ENCODE measurements at regions of chr18 and their contacts with region 1.

Region 1: DNA sequence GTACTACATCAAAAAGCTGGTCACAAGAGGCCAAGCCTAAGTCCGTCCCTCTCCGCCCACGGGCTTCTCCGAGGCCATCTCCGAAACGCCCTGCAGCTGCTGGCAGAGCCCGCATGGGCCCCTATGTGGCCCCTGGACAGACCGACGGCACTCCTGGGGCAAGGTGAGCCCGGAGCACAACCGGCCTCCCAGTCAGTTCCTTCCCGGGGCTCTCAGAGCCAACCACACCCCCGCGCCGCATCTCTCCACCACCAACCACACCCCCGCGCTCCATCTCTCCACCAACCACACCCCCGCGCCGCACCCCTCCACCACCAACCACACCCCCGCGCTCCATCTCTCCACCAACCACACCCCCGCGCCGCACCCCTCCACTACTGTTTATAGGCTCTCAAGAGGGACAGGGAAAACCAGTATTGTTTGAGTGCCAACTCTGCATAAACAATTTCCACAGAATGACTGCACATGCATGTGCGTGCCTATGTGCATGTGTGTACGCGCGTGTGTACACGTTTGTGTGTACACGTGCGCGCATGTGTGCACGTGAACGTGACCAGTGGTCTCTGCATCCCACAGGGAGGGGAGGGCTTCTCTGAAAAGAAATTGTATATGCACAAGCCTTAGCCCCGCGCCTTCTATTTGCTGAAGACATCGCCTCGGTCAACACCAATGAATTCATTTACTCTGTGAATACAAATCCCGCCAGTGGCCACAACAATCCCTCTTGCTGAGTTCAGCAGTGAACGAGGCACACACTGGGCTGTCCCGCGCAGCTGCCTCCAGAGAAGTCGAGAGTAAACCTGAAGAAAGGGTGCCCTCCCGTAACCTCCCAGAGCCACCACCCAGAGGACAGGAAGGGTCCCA is 93.3 kb downstream of the ZNF516 start:
- DNase-seq: no peak
- ATAC-seq: no peak
- H3K4me3 ChIP-seq: no peak overlapping the region
- H3K27ac ChIP-seq: no peak overlapping the region
- H3K4me1 ChIP-seq: no peaks in the 10 kb centered on the region
- H3K27me3 ChIP-seq: no peaks in the 10 kb centered on the region
- CTCF ChIP-seq: no peak
- POLR2A ChIP-seq: no peak

Region 2: DNA sequence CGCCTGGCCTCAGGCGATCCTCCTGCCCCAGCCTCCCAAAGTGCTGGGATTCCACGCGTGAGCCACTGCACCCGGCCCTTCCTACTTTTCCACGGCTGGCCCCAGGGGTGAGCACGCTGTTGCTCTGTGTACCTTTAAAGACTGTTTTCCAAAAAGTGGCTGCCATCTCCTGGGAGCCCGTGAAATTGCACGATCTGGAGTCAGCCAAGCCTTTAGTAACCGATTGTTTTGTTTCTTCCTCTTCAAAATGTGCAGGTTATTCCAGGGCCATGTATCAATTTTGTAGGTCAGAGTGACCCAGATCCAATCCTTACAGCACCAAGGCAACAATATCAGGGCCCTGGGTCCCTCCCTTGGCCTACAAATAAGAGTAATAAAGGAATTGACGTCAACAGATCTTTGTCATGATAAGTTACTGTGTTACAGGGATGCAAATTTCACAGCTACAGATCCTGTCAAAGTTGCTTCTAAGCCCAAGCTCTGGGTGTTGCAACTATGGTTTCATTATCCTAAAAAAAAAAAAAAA is 285.1 kb after region 1 on chr18:
- intact Hi-C with region 1: loop called (anchors 5 kb)
- DNase-seq: peak; percentile 60 to 72 (median 66)
- ATAC-seq: peak; percentile 85
- H3K4me3 ChIP-seq: no peak overlapping the region
- H3K27ac ChIP-seq: no peak overlapping the region
- H3K4me1 ChIP-seq: peaks cover 5% of the 10 kb centered on the region
- H3K27me3 ChIP-seq: peaks cover 0 to 6% of the 10 kb centered on the region in 2 donors
- CTCF ChIP-seq: peak; percentile 24 to 75 (median 64)
- POLR2A ChIP-seq: no peak

Region 3: DNA sequence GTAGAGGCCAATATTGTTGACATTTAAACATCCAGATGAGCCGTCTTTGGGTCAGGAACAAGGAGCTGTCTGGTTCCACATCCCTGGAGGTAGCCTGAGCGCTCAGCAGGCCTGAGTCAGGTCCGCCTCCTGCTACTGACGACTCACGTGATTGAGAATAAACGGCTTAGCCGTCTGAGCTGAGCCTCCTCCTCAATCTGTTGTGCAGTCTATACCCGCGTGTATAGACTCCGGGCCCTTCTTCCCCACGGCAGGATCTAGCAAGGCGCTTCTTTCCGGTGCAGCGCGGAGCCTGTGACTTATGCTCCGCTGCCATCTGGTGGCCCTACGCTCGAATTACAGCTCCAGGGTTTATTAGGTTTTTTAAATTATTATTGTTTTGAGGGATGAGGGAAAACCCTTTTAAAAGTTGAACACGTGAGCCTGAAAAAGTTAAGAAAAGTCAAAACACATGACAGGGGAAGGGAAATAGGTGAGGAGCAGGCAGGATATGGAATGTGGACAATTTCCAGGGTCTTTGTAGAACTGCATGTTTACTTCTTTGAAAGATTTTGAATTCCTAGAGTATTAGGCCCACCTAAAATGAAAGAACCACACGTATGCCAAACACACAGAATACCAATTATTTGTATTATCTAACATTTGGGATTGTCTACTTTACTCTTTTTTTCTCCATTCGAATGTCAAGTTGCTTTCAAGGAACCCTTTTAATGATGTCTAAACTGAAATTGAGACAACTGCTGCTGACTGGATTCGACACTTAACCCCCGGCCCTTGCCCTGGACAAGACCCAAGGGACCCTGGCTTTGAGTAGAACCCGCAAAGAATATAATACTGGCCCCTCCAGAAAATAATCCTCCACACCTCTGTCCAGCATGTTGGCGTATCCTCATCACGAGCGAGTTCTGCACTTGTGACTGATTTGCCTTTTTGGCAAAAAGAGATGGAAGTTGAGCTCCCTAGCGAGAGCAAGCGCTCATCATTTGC is 308.2 kb after region 1 on chr18:
- intact Hi-C with region 1: loop called (anchors 5 kb)
- DNase-seq: peak; percentile 63 to 75 (median 68)
- ATAC-seq: peak; percentile 80
- H3K4me3 ChIP-seq: no peak overlapping the region
- H3K27ac ChIP-seq: no peak overlapping the region
- H3K4me1 ChIP-seq: peaks cover 3% of the 10 kb centered on the region
- H3K27me3 ChIP-seq: no peaks in the 10 kb centered on the region
- CTCF ChIP-seq: peak; percentile 76 to 92 (median 87)
- POLR2A ChIP-seq: no peak